CD8-positive, alpha-beta T cell (primary cell): ENCODE measurements at regions of chr12 and their contacts with region 1.

Region 1: DNA sequence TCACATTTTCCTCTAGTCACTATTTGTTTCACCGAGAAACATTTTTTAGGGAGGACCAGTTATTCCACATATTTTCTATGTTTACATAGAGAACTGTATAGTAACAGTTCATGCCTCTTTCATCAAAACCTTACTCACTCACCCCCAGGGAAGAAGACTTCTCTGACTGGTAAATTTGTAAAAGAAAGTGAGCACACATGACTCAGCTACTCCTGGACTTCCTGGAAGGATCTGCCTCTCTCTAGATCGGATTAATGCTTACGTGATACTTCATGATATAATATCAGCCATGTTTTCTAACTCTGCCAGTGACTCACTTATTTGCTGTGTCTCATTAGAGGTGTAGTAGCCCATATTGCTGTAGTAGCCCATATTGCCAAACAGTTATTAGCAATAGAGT is 494.3 kb upstream of the ATXN7L3B start:
- DNase-seq: no peak
- ATAC-seq: no peak
- H3K4me3 ChIP-seq: no peak overlapping the region
- H3K4me3 Mint-ChIP-seq: no peak overlapping the region
- H3K27ac ChIP-seq: no peak overlapping the region
- H3K27ac Mint-ChIP-seq: no peak overlapping the region
- H3K4me1 ChIP-seq: no peaks in the 10 kb centered on the region
- H3K4me1 Mint-ChIP-seq: no peaks in the 10 kb centered on the region
- H3K27me3 ChIP-seq: no peaks in the 10 kb centered on the region
- H3K27me3 Mint-ChIP-seq: no peaks in the 10 kb centered on the region
- CTCF ChIP-seq: no peak

Region 2: GRCh38 chr12:74066476-74066875 is 23.2 kb after region 1 on chr12:
- CTCF ChIA-PET with region 1: no interaction called
- POLR2A ChIA-PET with region 1: no interaction called
- intact Hi-C with region 1: no loop called
- DNase-seq: no peak
- ATAC-seq: no peak
- H3K4me3 ChIP-seq: no peak overlapping the region
- H3K4me3 Mint-ChIP-seq: no peak overlapping the region
- H3K27ac ChIP-seq: no peak overlapping the region
- H3K27ac Mint-ChIP-seq: no peak overlapping the region
- H3K4me1 ChIP-seq: no peaks in the 10 kb centered on the region
- H3K4me1 Mint-ChIP-seq: no peaks in the 10 kb centered on the region
- H3K27me3 ChIP-seq: no peaks in the 10 kb centered on the region
- H3K27me3 Mint-ChIP-seq: no peaks in the 10 kb centered on the region
- CTCF ChIP-seq: no peak

Region 3: DNA sequence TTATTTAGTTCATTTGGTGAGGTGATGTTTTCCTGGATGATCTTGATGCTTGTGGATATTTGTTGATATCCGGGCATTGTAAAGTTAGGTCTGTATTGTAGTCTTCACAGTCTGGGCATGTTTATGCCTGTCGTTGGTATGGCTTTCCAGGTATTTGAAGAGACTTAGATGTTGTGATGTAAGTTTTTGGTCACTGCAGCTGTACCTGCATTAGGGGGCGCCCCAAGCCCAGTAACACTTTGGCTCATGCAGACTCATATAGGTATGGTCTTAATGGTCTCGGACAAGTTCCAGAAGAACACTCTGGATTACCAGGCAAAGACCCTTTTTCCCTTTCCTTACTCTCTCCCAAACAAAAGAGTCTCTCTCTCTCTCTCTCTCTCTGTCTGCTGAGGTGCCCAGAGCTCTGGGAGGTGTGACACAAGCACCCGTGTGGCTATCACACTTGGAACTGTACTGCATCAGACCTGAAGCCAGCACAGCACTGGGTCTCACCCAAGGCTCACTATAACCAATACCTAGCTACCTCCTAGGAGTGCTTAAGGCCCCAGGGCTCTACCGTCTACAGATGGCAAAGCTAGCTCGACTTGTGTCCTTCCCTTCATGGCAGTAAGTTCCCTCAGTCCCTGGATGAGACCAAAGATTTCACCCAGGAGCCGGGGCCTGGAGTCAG is 68.5 kb after region 1 on chr12:
- CTCF ChIA-PET with region 1: no interaction called
- POLR2A ChIA-PET with region 1: no interaction called
- intact Hi-C with region 1: loop called in 1 of 2 experiments (anchors 2 kb)
- DNase-seq: peak in 2 of 9 experiments; percentile 1 to 4
- ATAC-seq: no peak
- H3K4me3 ChIP-seq: no peak overlapping the region
- H3K4me3 Mint-ChIP-seq: no peak overlapping the region
- H3K27ac ChIP-seq: no peak overlapping the region
- H3K27ac Mint-ChIP-seq: no peak overlapping the region
- H3K4me1 ChIP-seq: no peaks in the 10 kb centered on the region
- H3K4me1 Mint-ChIP-seq: no peaks in the 10 kb centered on the region
- H3K27me3 ChIP-seq: no peaks in the 10 kb centered on the region
- H3K27me3 Mint-ChIP-seq: no peaks in the 10 kb centered on the region
- CTCF ChIP-seq: no peak

Region 4: GRCh38 chr12:74747305-74747704 is 704.0 kb after region 1 on chr12:
- CTCF ChIA-PET with region 1: no interaction called
- POLR2A ChIA-PET with region 1: no interaction called
- intact Hi-C with region 1: no loop called
- DNase-seq: peak in 1 of 9 experiments; percentile 10
- ATAC-seq: no peak
- H3K4me3 ChIP-seq: no peak overlapping the region
- H3K4me3 Mint-ChIP-seq: no peak overlapping the region
- H3K27ac ChIP-seq: no peak overlapping the region
- H3K27ac Mint-ChIP-seq: no peak overlapping the region
- H3K4me1 ChIP-seq: no peaks in the 10 kb centered on the region
- H3K4me1 Mint-ChIP-seq: no peaks in the 10 kb centered on the region
- H3K27me3 ChIP-seq: no peaks in the 10 kb centered on the region
- H3K27me3 Mint-ChIP-seq: no peaks in the 10 kb centered on the region
- CTCF ChIP-seq: no peak